Activated naive CD4-positive, alpha-beta T cell treated with anti-CD3 and anti-CD28 coated beads, Interleukin-2, amount 10 ng/mL, durations not matched to agents 7 days and 5 days (primary cell): ENCODE measurements at regions of chr18 and their contacts with region 1.

Region 1: GRCh38 chr18:36839835-36840234 is 10.9 kb downstream of the KIAA1328 start:
- DNase-seq: no peak
- H3K4me3 Mint-ChIP-seq: no peak overlapping the region
- H3K27ac Mint-ChIP-seq: no peak overlapping the region
- H3K4me1 Mint-ChIP-seq: peaks cover 9% of the 10 kb centered on the region
- H3K27me3 Mint-ChIP-seq: no peaks in the 10 kb centered on the region

Region 2: DNA sequence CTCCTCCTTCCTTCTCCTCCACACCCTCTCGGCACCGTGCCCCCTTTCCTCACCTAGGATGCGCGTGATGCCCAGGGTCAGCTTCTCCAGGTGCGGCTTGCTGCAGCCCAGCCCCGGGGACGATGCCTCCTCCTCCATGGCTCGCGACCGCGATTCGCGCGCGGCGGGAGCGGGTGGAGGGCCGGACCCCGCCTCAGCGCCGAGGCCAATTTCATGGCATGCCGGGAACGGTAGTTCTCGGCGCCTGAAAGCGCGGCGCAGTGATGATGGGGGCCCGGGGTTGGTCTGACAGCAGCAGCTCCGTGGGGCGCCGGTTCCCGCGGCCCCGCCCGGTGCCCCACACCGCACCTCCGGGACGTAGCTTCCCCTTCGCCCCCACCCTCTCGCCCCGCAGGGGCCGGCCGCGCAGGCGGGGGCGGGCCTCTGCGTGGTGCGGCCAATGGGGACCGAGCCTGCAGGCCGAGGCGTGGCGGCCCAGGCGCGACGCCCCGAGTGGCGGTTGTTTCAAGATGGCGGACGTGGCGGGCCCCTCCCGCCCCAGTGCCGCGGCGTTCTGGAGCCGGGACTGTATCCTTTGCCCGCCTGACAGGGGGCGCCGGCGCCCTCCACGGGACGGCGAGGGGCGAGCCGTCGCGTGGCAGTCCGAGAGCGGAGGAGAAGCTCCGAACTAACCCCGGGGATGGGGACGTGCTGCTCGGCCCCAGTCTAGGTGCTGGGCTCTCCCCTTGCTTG is 11.0 kb before region 1 on chr18 and contains the starts of genes KIAA1328 and TPGS2:
- CTCF ChIA-PET with region 1: interaction called, 13 read pairs
- DNase-seq: peak; percentile 92
- H3K4me3 Mint-ChIP-seq: peak within 1 kb of the TSS; percentile 75
- H3K27ac Mint-ChIP-seq: peak within 1 kb of the TSS; percentile 97
- H3K4me1 Mint-ChIP-seq: peaks cover 50% of the 10 kb centered on the region
- H3K27me3 Mint-ChIP-seq: no peaks in the 10 kb centered on the region

Region 3: DNA sequence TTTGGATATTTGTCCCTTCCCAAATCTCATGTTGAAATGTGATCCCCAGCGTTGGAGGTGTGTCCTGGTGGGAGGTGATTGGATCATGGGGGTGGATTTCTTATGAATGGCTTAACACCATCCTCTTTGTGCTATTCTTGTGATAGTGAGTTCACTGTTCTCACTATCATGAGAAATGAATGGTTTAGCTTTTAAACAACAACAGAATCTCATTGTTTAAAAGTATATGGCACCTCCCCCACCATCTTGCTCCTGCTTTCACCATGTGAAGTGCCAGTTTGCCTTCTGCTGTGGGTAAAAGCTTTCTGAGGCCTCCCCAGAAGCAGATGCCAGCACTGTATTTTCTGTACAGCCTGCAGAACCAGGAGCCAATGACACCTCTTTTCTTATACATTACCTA is 27.2 kb after region 1 on chr18:
- CTCF ChIA-PET with region 1: no interaction called
- DNase-seq: no peak
- H3K4me3 Mint-ChIP-seq: no peak overlapping the region
- H3K27ac Mint-ChIP-seq: no peak overlapping the region
- H3K4me1 Mint-ChIP-seq: no peaks in the 10 kb centered on the region
- H3K27me3 Mint-ChIP-seq: no peaks in the 10 kb centered on the region

Region 4: GRCh38 chr18:37138456-37138855 is 298.6 kb after region 1 on chr18:
- CTCF ChIA-PET with region 1: no interaction called
- DNase-seq: no peak
- H3K4me3 Mint-ChIP-seq: no peak overlapping the region
- H3K27ac Mint-ChIP-seq: no peak overlapping the region
- H3K4me1 Mint-ChIP-seq: no peaks in the 10 kb centered on the region
- H3K27me3 Mint-ChIP-seq: no peaks in the 10 kb centered on the region